Lower leg skin (tissue), 4 donors: ENCODE measurements at regions of chr22 and their contacts with region 1.

Region 1: DNA sequence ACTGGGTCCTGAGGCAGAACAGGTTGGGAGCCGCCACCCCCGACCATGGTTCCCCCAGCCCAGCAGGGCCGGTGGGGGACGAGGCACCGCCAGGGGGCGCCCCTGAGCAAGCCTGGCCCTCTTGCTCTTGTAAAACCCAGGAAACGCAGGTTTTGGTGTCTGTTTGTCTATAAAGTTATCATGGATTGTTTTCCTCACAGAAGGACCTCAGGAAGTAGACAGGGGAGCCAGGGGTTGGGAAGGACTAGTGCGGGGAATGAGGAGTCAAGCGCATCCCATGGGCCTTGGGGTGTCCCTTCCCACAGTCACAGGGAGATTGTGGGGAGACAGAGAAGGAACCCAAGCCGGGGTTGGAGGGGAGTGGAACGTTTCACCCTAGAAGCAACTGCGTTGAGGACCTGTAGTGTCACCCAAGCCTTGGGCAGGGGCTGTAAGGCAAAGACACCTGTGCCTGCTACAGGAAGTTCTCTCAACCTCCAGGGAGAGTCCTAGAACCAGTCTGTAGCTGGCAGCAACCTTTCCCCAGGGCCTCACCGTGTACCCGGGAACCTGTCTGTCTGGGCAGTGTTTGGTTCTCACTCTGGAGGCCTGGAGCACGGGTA is 26.4 kb downstream of the KCTD17 start:
- DNase-seq: peak in 1 of 2 donors; percentile 92
- H3K4me3 ChIP-seq: no peak overlapping the region
- CTCF ChIP-seq: peak in 1 of 3 donors; percentile 29
- POLR2A ChIP-seq: no peak

Region 2: GRCh38 chr22:37154925-37155712 is 77.1 kb after region 1 on chr22:
- intact Hi-C with region 1: loop called (anchors 10 kb)
- DNase-seq: no peak
- H3K4me3 ChIP-seq: no peak overlapping the region
- CTCF ChIP-seq: no peak
- POLR2A ChIP-seq: no peak

Region 3: GRCh38 chr22:37199103-37199759 is 121.2 kb after region 1 on chr22:
- intact Hi-C with region 1: loop called (anchors 5 kb)
- DNase-seq: peak; percentile 98 to 100
- H3K4me3 ChIP-seq: peak overlapping the region; percentile 51
- CTCF ChIP-seq: no peak
- POLR2A ChIP-seq: peak in 1 of 2 donors; percentile 96